H1 (cell line): ENCODE measurements at regions of chr3 and their contacts with region 1.

Region 1: GRCh38 chr3:5122030-5122740 is at the start of gene ARL8B:
- DNase-seq: peak; percentile 29 to 94
- H3K4me3 ChIP-seq: peak within 1 kb of the TSS; percentile 73 to 98 (median 90)
- H3K27ac ChIP-seq: peak within 1 kb of the TSS; percentile 89
- H3K4me1 ChIP-seq: peaks cover 0 to 2% (median 0%) of the 10 kb centered on the region in 4 experiments; a peak in 1 of 7 replicates
- H3K27me3 ChIP-seq: no peaks in the 10 kb centered on the region
- CTCF ChIP-seq: peak; percentile 93 to 98 (median 98)
- EP300 ChIP-seq: peak in 1 of 2 experiments; percentile 73; a peak in 1 of 3 replicates
- POLR2A ChIP-seq: peak; percentile 70 to 87
- RAD21 ChIP-seq: peak; percentile 43 to 50; a peak in 3 of 4 replicates
- total RNA-seq, gene ARL8B: 25.8 and 27.8 TPM in 2 replicates

Region 2: GRCh38 chr3:4994823-4995499 is 127.2 kb before region 1 on chr3:
- CTCF ChIA-PET with region 1: no interaction called
- POLR2A ChIA-PET with region 1: no interaction called
- DNase-seq: no peak
- H3K4me3 ChIP-seq: no peak overlapping the region
- H3K27ac ChIP-seq: no peak overlapping the region
- H3K4me1 ChIP-seq: peaks cover 0 to 3% (median 1%) of the 10 kb centered on the region in 4 experiments; a peak in 5 of 7 replicates
- H3K27me3 ChIP-seq: no peaks in the 10 kb centered on the region; a peak in 1 of 7 replicates
- CTCF ChIP-seq: no peak
- EP300 ChIP-seq: no peak
- POLR2A ChIP-seq: no peak
- RAD21 ChIP-seq: no peak

Region 3: GRCh38 chr3:5112043-5112442 is 10.1 kb before region 1 on chr3:
- CTCF ChIA-PET with region 1: interaction called, 5 read pairs
- POLR2A ChIA-PET with region 1: interaction called, 11 read pairs
- DNase-seq: no peak
- H3K4me3 ChIP-seq: no peak overlapping the region
- H3K27ac ChIP-seq: no peak overlapping the region
- H3K4me1 ChIP-seq: no peaks in the 10 kb centered on the region
- H3K27me3 ChIP-seq: no peaks in the 10 kb centered on the region
- CTCF ChIP-seq: no peak
- EP300 ChIP-seq: no peak
- POLR2A ChIP-seq: no peak
- RAD21 ChIP-seq: no peak